CD4-positive, alpha-beta memory T cell (primary cell): ENCODE measurements at regions of chr11 and their contacts with region 1.

Region 1: GRCh38 chr11:10322830-10323792 is 18.2 kb downstream of the ADM start:
- DNase-seq: peak; percentile 48 to 81 (median 50)
- H3K4me3 ChIP-seq: no peak overlapping the region
- H3K4me3 Mint-ChIP-seq: peak overlapping the region in 2 of 8 donors; percentile 3 to 18
- H3K27ac ChIP-seq: no peak overlapping the region
- H3K27ac Mint-ChIP-seq: peak overlapping the region in 3 of 7 donors; percentile 46 to 76 (median 64)
- H3K4me1 ChIP-seq: peaks cover 5% of the 10 kb centered on the region
- H3K4me1 Mint-ChIP-seq: peaks cover 0 to 2% (median under 1%) of the 10 kb centered on the region in 4 donors
- H3K27me3 ChIP-seq: peaks cover 4% of the 10 kb centered on the region
- H3K27me3 Mint-ChIP-seq: peaks cover 8 to 15% of the 10 kb centered on the region in 2 donors

Region 2: GRCh38 chr11:9861860-9862725 is 461.0 kb before region 1 on chr11:
- CTCF ChIA-PET with region 1: interaction called, 5 read pairs
- POLR2A ChIA-PET with region 1: no interaction called
- intact Hi-C with region 1: loop called (anchors 1 kb)
- DNase-seq: peak; percentile 30 to 54 (median 33)
- H3K4me3 ChIP-seq: no peak overlapping the region
- H3K4me3 Mint-ChIP-seq: no peak overlapping the region
- H3K27ac ChIP-seq: no peak overlapping the region
- H3K27ac Mint-ChIP-seq: no peak overlapping the region
- H3K4me1 ChIP-seq: peaks cover 13% of the 10 kb centered on the region
- H3K4me1 Mint-ChIP-seq: peaks cover 12 to 27% (median 17%) of the 10 kb centered on the region in 4 donors
- H3K27me3 ChIP-seq: no peaks in the 10 kb centered on the region
- H3K27me3 Mint-ChIP-seq: no peaks in the 10 kb centered on the region

Region 3: GRCh38 chr11:9972989-9973388 is 350.1 kb before region 1 on chr11:
- CTCF ChIA-PET with region 1: no interaction called
- POLR2A ChIA-PET with region 1: no interaction called
- intact Hi-C with region 1: loop called (anchors 5 kb)
- DNase-seq: peak in 4 of 5 donors; percentile 8 to 32 (median 18)
- H3K4me3 ChIP-seq: no peak overlapping the region
- H3K4me3 Mint-ChIP-seq: no peak overlapping the region
- H3K27ac ChIP-seq: no peak overlapping the region
- H3K27ac Mint-ChIP-seq: no peak overlapping the region
- H3K4me1 ChIP-seq: no peaks in the 10 kb centered on the region
- H3K4me1 Mint-ChIP-seq: no peaks in the 10 kb centered on the region
- H3K27me3 ChIP-seq: no peaks in the 10 kb centered on the region
- H3K27me3 Mint-ChIP-seq: no peaks in the 10 kb centered on the region